Posterior vena cava (tissue), 2 donors: ENCODE measurements at regions of chr5 and their contacts with region 1.

Region 1: GRCh38 chr5:59367791-59368394 is 525.6 kb downstream of the PDE4D start:
- DNase-seq: peak; percentile 78

Region 2: DNA sequence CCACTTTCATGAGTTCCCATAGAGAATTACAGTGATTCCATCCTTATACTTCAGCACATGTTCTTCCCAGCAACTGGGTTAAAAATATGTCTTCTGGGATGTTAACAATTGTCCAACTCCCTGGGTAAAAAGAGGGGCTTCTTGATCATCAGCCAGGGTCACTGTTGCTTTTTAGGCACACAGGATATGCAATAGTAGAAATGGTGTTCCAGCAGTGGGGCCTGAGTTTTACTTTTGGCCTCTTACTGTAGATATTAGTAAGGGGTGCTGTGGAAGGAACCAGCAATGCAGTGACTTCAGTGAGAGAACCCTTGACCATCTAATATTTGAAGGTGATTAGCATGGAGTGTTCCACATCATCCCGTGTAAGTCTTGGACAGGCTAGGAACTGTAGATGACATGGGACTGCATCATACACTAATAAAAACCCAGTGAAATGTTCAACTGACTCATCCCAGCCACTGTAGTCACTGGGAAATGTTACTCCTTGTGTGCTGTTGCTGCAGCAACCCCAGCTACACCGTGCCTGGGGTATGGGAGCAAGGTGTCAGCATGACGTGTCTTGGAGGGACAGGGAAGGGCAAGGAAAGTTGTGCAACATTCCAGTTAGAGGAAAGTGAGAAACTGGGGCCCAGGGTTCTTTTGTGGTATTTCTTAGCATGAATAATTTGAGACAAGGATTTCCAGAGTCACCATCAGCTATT is 174.1 kb before region 1 on chr5:
- intact Hi-C with region 1: loop called (anchors 10 kb)
- DNase-seq: no peak

Region 3: DNA sequence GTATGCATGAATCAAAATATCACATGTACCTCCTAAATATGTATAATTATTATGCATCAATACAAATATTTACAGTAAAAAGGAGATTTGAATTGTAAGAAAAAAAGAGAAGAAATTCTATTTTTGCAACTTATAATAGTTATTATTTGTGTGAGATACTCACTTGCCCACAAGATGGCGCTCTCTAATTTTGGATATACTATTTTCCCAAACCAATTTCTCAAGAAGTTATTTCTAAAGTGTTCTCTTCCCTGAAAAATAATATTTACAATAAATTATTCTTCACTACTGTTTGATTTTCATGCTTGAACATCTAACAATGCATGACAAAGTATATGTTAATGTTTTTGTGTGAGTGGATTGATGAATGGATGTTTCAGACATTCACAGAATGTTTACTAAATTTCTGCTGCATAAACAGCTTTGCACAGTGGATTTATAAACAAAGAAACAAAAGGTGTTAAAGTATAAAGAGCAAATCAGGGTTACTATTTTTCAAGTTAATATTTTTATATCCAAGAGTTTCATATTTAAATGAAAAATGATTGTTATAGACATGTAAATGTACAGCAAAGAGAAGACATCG is 22.3 kb after region 1 on chr5:
- intact Hi-C with region 1: no loop called
- DNase-seq: no peak